ENCODE measurements at regions of chr1 and their contacts with region 1.

Region 1: DNA sequence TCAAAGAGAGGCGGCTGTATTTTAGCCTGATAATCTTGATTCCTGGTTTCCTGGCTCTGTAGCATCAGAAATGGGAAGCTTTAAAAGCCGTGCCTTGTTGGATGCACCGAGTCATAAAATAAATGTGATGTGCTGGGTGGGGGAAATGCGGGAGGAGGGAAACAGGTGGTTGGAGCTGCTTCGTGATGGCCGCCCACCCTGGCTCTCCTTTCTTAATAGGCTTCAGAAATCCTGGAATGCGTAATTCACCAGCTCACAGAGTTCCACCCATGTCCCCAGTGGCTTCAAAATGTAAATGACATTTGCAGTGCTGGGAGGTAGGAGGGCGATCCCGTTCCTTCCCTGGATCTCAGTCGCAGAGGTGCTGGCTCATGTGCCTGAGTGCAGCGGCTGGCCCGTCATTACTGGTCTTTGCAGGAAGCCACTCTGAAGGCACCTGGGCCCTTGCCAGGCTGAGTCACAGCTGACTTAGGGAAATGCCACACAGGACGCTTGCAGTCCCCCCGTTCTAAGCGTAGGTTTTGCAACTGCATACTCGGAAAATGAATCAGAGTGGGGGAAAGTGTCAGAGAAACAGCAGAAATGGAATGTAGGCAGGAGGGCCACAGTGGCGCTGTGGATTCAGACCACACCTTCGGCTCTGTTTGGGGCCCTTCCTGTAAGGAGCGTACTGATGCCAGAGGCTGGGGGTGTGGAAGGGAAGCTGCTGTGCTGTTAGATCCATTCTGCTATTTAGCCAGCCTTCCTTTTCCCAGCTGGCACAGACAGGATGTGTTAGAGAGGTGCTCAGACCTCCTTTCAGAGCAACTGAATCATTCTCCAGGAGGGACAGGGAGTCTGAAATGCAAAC is 37.6 kb downstream of the GALNT2 start:
- DNase-seq: peak; percentile 100
- ATAC-seq: peak; percentile 86
- H3K4me3 ChIP-seq: peak overlapping the region; percentile 57
- H3K27ac ChIP-seq: peak overlapping the region; percentile 95
- H3K4me1 ChIP-seq: peaks cover 70% of the 10 kb centered on the region
- H3K27me3 ChIP-seq: no peaks in the 10 kb centered on the region
- CTCF ChIP-seq: peak; percentile 20; the same call in 1 of the 2 replicates

Region 2: DNA sequence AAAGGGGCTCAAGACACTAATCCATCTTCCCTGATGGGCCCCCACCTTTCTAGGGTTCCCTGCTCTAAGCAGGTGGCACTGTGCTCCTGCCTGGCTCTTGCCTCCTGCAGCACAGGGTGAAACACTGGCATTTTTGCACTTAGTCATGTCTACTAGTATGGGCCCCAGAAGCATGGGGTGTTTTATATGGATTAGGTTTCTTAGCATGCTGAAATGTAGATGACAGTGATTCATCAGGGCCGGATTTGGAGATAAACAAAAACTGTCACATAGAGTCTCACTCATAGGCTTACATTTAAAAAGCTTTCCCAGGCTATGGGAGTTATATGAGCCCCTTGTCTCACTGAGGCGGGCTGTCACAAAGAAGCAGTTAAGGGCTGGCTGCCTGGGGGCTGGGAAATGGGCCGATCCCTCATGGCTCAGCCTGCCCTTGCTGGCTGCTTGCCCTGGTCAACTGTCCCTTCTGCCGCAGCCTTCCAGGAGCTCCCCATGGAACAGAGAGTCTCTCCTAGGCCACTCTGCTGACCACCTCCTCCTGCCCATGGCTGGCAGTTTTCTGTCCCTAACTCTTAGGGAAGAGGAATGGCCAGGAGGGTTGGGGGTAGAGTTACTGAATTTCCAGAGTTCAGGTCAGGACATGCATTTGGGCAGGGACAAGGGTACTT is 31.1 kb before region 1 on chr1:
- CTCF ChIA-PET with region 1: interaction called, 4 read pairs
- POLR2A ChIA-PET with region 1: interaction called, 8 read pairs
- intact Hi-C with region 1: loop called (anchors 1 kb)
- DNase-seq: peak; percentile 99
- ATAC-seq: peak; percentile 87
- H3K4me3 ChIP-seq: peak overlapping the region; percentile 36
- H3K27ac ChIP-seq: peak overlapping the region; percentile 91
- H3K4me1 ChIP-seq: peaks cover 76% of the 10 kb centered on the region
- H3K27me3 ChIP-seq: no peaks in the 10 kb centered on the region
- CTCF ChIP-seq: no peak; the same call in 1 of the 2 replicates

Region 3: GRCh38 chr1:230090194-230090711 is 14.4 kb before region 1 on chr1:
- CTCF ChIA-PET with region 1: interaction called, 18 read pairs
- POLR2A ChIA-PET with region 1: interaction called, 17 read pairs
- intact Hi-C with region 1: loop called (anchors 1 kb)
- DNase-seq: peak; percentile 96
- ATAC-seq: peak; percentile 69
- H3K4me3 ChIP-seq: peak overlapping the region; percentile 49
- H3K27ac ChIP-seq: peak overlapping the region; percentile 90
- H3K4me1 ChIP-seq: peaks cover 82% of the 10 kb centered on the region
- H3K27me3 ChIP-seq: no peaks in the 10 kb centered on the region
- CTCF ChIP-seq: no peak

Region 4: DNA sequence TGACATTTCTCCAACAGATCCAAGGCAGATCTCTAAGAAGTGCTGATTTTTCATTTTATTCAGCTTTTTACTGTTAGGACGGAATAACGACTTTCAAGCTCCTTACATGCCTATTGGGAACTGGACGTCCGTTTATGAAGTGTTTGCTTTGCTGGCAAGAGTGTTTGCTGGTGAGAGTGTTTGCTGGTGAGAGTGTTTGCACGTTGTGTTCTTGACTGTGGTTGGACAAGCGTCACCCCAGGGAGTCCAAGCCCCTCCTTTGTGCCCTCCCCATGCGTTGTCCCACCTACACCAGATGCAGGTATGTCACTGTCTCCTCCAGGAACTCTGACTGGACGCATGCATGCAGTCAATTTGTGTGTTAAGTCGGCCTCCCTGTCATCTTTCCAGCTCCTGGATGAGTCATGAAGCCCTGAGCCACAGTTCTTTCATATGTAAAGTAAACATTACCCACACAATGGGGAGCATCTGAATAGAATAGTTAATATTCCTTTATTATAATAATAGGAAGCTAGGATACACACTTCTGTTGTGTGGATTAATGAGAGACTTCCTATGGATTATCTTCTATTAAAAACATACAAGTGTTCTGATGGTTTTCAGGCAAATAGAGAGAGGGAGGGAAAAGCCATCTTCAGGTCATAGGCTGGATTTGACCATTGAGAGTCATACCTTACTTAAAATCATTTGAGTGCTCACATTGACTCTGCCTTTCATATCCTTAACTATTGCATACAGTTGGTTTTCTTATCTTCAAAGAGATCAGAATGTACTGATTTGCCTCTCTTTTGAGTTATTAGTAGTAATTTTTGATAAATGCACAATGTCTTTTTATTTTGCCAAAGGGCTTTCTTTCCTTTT is 81.6 kb after region 1 on chr1:
- CTCF ChIA-PET with region 1: no interaction called
- POLR2A ChIA-PET with region 1: interaction called, 5 read pairs
- intact Hi-C with region 1: loop called (anchors 1 kb)
- DNase-seq: peak; percentile 100
- ATAC-seq: peak; percentile 99
- H3K4me3 ChIP-seq: peak overlapping the region; percentile 43
- H3K27ac ChIP-seq: peak overlapping the region; percentile 65
- H3K4me1 ChIP-seq: peaks cover 23% of the 10 kb centered on the region
- H3K27me3 ChIP-seq: no peaks in the 10 kb centered on the region
- CTCF ChIP-seq: no peak

Measured in PC-3 (cell line).